CD4-positive, alpha-beta memory T cell (primary cell): ENCODE measurements at regions of chr22 and their contacts with region 1.

Region 1: DNA sequence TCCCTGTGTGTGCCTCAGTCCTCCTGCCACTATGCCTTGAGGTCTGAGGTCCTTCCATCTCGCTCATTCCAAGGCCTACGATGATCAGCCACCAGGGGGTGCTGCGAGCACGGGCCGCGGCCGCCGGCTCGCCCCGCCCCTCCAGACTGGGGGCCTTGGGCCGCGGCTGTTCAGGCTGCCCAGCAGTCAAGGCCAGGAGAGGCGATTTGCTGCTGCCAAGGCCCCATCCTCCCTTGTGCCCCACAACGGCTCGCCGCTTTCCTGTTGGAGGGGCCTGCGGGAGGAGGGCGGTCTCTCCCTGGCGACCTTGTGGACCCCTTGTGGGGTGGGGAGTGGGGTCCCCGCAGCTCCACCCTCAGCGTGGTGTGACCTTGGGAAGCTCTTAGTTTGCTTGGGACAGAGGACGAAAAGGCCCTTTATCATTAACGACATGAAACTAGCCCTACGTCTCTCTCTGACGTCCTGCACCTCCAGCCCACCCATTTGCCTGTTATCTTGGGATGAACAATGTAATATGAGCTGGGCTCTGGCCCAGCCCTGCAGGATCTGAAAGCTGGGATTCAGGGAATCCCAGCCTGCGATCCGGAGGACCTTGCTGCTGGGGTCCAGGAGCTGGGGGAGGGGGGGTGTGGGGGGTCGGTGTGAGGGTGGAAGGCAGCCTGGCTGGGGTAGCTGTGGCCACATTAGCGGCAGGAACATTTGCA is 5.3 kb upstream of the GALR3 start:
- DNase-seq: peak; percentile 68 to 77 (median 71)
- H3K4me3 ChIP-seq: peak overlapping the region; percentile 34 to 36
- H3K4me3 Mint-ChIP-seq: peak overlapping the region in 7 of 8 donors; percentile 27 to 75 (median 48)
- H3K27ac ChIP-seq: no peak overlapping the region
- H3K27ac Mint-ChIP-seq: peak overlapping the region in 1 of 7 donors; percentile 30
- H3K4me1 ChIP-seq: peaks cover 19% of the 10 kb centered on the region
- H3K4me1 Mint-ChIP-seq: peaks cover 2 to 19% (median 11%) of the 10 kb centered on the region in 4 donors
- H3K27me3 ChIP-seq: no peaks in the 10 kb centered on the region
- H3K27me3 Mint-ChIP-seq: peaks cover 6 to 11% of the 10 kb centered on the region in 2 donors

Region 2: DNA sequence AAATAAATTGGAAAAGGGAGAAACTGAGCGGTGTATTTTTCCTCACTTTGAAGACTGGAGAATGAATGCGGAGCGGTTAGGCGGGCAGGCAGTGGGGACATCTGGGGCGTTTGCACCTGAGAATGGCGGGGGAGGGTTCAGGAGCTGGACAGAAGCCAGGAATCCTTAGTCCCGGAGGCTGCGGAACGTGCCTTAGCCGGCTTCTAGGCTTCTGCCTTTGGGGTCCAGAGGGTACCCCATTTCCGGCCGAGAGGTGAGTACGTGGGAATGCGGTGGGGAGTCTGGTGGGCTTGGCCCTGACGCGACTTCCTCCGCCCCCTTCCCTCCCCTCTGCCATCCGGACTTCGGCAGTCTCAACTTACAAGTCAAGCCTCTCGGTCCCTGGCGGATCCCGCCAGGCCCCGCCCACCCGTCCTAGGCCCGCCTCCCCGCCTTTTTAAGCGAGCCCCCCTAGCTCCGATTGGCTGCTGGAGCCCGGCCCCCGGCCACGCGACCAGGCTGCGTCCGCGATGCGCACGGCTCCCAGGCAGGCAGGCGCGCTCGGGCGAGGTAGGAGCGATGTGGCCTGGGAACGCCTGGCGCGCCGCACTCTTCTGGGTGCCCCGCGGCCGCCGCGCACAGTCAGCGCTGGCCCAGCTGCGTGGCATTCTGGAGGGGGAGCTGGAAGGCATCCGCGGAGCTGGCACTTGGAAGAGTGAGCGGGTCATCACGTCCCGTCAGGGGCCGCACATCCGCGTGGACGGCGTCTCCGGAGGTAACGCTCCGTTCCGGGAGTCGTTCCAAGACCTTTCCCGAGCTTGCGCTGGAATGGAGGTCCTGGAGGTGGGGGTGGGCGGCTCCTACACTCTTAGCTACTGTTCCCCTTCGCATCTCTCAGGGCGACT is 10.2 kb before region 1 on chr22 and contains the start of gene GCAT:
- CTCF ChIA-PET with region 1: interaction called, 50 read pairs
- POLR2A ChIA-PET with region 1: interaction called, 6 read pairs
- intact Hi-C with region 1: no loop called
- DNase-seq: peak; percentile 70 to 82 (median 75)
- H3K4me3 ChIP-seq: peak within 1 kb of the TSS; percentile 36 to 45
- H3K4me3 Mint-ChIP-seq: peak within 1 kb of the TSS; percentile 69 to 87 (median 78)
- H3K27ac ChIP-seq: no peak within 1 kb of the TSS
- H3K27ac Mint-ChIP-seq: peak within 1 kb of the TSS in 4 of 7 donors; percentile 32 to 47 (median 45)
- H3K4me1 ChIP-seq: peaks cover 50% of the 10 kb centered on the region
- H3K4me1 Mint-ChIP-seq: peaks cover 17 to 50% (median 37%) of the 10 kb centered on the region in 4 donors
- H3K27me3 ChIP-seq: peaks cover 20% of the 10 kb centered on the region
- H3K27me3 Mint-ChIP-seq: peaks cover 30% of the 10 kb centered on the region in 2 donors
- total RNA-seq, gene GCAT: 3.4 to 4.4 TPM

Region 3: DNA sequence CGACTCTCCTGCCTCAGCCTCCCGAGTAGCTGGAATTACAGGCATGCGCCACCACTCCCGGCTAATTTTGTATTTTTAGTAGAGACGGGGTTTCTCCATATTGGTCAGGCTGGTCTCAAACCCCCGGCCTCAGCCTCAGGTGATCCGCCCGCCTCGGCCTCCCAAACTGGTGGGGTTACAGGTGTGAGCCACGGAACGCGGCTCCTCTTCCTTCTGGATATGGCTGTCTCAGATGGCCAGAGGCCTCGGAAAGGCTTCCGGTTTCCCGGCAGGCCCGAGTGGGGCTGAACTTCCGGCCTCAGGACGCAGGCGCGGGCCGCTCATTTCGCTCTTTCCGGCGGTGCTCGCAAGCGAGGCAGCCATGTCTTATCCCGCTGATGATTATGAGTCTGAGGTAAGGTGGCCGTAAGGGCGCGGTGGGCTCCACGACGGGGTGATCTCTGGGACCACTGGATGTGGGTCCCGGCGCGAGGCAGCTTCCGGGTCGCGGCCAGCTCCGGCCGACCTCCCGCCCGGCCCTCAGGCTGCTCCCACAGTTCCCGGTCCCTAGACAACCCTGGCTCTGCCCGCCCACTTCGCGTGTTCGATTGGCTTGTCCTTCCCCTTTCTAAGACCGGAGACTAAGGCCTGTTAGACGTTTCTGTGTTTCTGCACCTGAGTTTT is 31.4 kb after region 1 on chr22 and contains the start of gene EIF3L:
- CTCF ChIA-PET with region 1: interaction called, 13 read pairs
- POLR2A ChIA-PET with region 1: interaction called, 13 read pairs
- intact Hi-C with region 1: loop called (anchors 1 kb)
- DNase-seq: peak; percentile 81 to 88 (median 85)
- H3K4me3 ChIP-seq: peak within 1 kb of the TSS; percentile 61 to 94
- H3K4me3 Mint-ChIP-seq: peak within 1 kb of the TSS; percentile 83 to 98 (median 93)
- H3K27ac ChIP-seq: peak within 1 kb of the TSS; percentile 87
- H3K27ac Mint-ChIP-seq: peak within 1 kb of the TSS; percentile 91 to 99 (median 97)
- H3K4me1 ChIP-seq: peaks cover 29% of the 10 kb centered on the region
- H3K4me1 Mint-ChIP-seq: peaks cover 28 to 58% (median 43%) of the 10 kb centered on the region in 4 donors
- H3K27me3 ChIP-seq: no peaks in the 10 kb centered on the region
- H3K27me3 Mint-ChIP-seq: no peaks in the 10 kb centered on the region
- total RNA-seq, gene EIF3L: 550 to 571 TPM

Region 4: DNA sequence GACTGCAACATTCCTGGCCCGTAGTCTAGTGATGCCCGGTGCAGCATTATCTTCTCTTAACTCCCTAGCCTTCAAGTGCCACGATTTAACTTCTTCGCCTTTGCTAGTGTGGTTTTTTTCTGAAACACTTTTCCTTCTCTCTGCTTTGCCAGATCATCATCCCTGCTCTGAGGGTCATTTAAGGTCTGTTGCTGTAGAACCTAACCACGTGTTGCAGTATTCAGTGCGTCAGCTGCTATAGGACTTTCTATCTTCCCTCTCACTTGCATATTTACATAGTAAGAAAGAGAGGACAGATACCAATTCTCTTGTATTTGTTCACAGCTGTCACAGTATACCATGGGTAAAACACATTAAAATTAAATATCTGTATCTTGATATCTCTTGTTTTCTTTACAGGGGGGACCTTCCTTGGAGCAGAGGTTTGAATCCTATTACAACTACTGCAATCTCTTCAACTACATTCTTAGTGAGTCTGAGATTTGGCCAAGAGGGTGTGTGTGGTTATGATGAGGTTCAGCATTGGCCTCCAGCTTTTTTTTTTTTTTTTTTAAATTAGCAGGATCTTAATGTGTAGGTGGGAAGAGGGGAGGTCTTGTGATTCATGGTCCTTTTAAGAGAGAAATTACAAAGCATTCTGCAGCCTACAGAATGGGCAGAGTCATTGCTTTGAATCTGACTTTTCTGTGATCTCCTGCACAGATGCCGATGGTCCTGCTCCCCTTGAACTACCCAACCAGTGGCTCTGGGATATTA is 44.9 kb after region 1 on chr22:
- CTCF ChIA-PET with region 1: interaction called, 255 read pairs
- POLR2A ChIA-PET with region 1: interaction called, 9 read pairs
- intact Hi-C with region 1: loop called (anchors 1 kb)
- DNase-seq: no peak
- H3K4me3 ChIP-seq: no peak overlapping the region
- H3K4me3 Mint-ChIP-seq: no peak overlapping the region
- H3K27ac ChIP-seq: no peak overlapping the region
- H3K27ac Mint-ChIP-seq: peak overlapping the region in 3 of 7 donors; percentile 38 to 74 (median 53)
- H3K4me1 ChIP-seq: peaks cover 5% of the 10 kb centered on the region
- H3K4me1 Mint-ChIP-seq: peaks cover 2 to 5% (median 4%) of the 10 kb centered on the region in 4 donors
- H3K27me3 ChIP-seq: no peaks in the 10 kb centered on the region
- H3K27me3 Mint-ChIP-seq: no peaks in the 10 kb centered on the region

Region 5: GRCh38 chr22:37933711-37934376 is 116.0 kb after region 1 on chr22:
- CTCF ChIA-PET with region 1: interaction called, 42 read pairs
- POLR2A ChIA-PET with region 1: no interaction called
- intact Hi-C with region 1: loop called (anchors 1 kb)
- DNase-seq: peak; percentile 67 to 79 (median 72)
- H3K4me3 ChIP-seq: no peak overlapping the region
- H3K4me3 Mint-ChIP-seq: peak overlapping the region in 1 of 8 donors; percentile 26
- H3K27ac ChIP-seq: no peak overlapping the region
- H3K27ac Mint-ChIP-seq: peak overlapping the region in 2 of 7 donors; percentile 22 to 24
- H3K4me1 ChIP-seq: peaks cover 11% of the 10 kb centered on the region
- H3K4me1 Mint-ChIP-seq: peaks cover 7 to 13% (median 8%) of the 10 kb centered on the region in 4 donors
- H3K27me3 ChIP-seq: no peaks in the 10 kb centered on the region
- H3K27me3 Mint-ChIP-seq: no peaks in the 10 kb centered on the region